Psoas muscle (tissue), 8 donors: ENCODE measurements at regions of chr5 and their contacts with region 1.

Region 1: GRCh38 chr5:150778517-150779396 is at the start of gene SMIM3:
- DNase-seq: peak; percentile 85 to 91
- ATAC-seq: peak; percentile 73 to 85 (median 80)
- H3K4me3 ChIP-seq: peak within 1 kb of the TSS; percentile 79
- H3K27ac ChIP-seq: peak within 1 kb of the TSS; percentile 79
- H3K4me1 ChIP-seq: peaks cover 11% of the 10 kb centered on the region
- H3K27me3 ChIP-seq: no peaks in the 10 kb centered on the region
- CTCF ChIP-seq: peak; percentile 4
- total RNA-seq, gene SMIM3: 6.4 to 7.0 (median 6.8) TPM

Region 2: DNA sequence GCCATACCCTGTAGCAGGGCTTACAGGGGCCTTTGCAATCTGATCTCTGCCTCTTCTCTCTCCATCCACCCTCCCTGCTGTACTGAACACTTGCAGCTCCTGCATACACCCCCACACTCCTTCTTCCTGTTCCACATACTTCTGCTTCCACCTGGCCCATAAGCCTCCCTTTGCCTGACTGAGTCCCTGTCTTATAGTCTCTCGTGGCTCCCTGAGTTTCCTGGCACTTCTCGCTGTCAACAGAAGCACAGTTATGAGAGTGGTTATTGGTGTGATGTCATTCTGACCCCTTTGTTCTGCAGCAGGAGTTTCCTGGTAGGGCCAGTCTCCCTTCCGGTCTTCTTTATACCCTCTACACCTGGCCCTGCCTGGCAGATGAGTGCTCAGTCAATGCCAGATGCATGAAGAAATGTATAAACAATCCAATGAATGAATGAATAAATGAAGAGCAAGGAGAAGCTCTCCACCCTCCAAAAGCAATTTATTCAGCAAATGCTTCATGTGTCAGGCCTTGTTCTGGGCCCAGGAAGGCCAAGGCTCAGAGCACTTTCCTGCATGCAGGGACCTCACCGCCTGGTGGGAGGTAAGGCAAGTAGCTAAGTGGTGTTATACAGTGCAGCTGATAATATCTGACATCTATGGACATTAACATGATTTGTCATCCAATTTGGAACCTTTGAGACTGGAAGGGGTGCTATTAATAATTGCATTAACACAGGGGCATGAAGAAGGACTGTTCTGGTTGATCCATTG is 671.9 kb before region 1 on chr5:
- intact Hi-C with region 1: loop called in 1 of 2 experiments (anchors 10 kb)
- DNase-seq: no peak
- ATAC-seq: no peak
- H3K4me3 ChIP-seq: no peak overlapping the region
- H3K27ac ChIP-seq: no peak overlapping the region
- H3K4me1 ChIP-seq: no peaks in the 10 kb centered on the region
- H3K27me3 ChIP-seq: no peaks in the 10 kb centered on the region
- CTCF ChIP-seq: no peak

Region 3: DNA sequence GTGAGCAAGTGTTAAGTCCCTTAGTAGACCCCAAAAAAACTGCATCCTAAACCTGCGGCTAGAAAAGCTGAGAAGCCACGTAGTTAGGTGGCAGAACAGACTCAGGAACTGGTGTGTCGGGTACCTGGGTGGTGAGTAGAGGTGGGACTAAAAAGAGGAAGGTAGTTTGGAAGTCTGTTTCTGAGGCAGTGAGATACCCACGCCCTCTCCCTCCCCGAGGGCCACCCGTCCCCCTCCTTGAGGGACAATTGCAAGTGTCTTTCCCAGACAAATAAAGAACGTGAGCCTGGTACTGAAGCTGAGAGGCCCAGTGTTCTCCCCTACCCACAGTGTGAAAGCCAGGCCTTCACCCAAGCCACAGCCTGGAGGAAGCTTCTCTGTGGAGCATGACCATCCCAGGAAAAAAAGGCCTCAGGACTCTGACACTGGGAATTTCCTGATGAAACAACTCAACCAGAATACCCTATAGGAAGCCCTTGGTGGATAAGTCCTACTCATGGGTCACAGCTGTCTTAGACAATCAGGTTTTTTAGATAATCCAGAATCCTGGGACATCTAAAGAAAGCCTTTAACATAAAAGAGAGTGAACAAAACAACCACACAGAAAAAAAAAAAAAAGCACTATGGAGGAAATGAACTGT is 359.0 kb before region 1 on chr5:
- intact Hi-C with region 1: no loop called
- DNase-seq: no peak
- ATAC-seq: no peak
- H3K4me3 ChIP-seq: no peak overlapping the region
- H3K27ac ChIP-seq: no peak overlapping the region
- H3K4me1 ChIP-seq: no peaks in the 10 kb centered on the region
- H3K27me3 ChIP-seq: no peaks in the 10 kb centered on the region
- CTCF ChIP-seq: no peak